ENCODE measurements at regions of chr6 and their contacts with region 1.

Region 1: DNA sequence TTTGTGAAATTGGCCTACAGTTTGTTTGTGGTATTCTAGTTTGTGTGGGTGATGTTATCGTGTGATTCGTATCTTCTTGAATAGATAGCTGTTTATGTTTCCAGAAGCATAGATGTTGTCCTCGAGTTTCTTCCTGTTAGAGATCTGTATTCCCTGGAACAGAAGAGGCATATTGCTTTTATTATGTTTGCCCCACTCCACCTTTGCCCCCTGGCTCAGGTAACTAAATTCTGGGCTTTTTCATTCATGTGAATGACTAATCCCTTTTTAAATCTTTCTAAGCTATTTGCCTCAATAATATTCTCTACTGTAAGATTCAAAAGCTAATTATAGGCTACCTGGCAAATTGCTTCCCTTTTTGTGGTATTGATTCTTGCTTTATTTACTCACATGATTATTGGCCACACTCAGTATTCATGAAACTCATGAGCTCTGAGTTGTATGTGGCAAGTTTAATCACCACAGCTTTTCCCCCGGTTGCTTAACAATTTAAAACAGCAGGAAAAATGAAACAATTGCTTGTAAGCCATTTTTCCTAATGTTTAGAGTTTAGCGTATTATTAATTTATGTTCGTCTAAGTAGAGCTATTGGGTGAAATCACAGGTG is 12.6 kb downstream of the RNF217 start:
- DNase-seq: no peak
- H3K4me3 ChIP-seq: no peak overlapping the region
- H3K27ac ChIP-seq: no peak overlapping the region
- H3K4me1 ChIP-seq: no peaks in the 10 kb centered on the region
- H3K27me3 ChIP-seq: no peaks in the 10 kb centered on the region

Region 2: GRCh38 chr6:124819346-124819745 is 155.5 kb before region 1 on chr6:
- CTCF ChIA-PET with region 1: no interaction called
- POLR2A ChIA-PET with region 1: no interaction called
- DNase-seq: peak in 2 of 3 donors; percentile 17 to 26
- H3K4me3 ChIP-seq: no peak overlapping the region
- H3K27ac ChIP-seq: no peak overlapping the region
- H3K4me1 ChIP-seq: no peaks in the 10 kb centered on the region
- H3K27me3 ChIP-seq: no peaks in the 10 kb centered on the region

Region 3: DNA sequence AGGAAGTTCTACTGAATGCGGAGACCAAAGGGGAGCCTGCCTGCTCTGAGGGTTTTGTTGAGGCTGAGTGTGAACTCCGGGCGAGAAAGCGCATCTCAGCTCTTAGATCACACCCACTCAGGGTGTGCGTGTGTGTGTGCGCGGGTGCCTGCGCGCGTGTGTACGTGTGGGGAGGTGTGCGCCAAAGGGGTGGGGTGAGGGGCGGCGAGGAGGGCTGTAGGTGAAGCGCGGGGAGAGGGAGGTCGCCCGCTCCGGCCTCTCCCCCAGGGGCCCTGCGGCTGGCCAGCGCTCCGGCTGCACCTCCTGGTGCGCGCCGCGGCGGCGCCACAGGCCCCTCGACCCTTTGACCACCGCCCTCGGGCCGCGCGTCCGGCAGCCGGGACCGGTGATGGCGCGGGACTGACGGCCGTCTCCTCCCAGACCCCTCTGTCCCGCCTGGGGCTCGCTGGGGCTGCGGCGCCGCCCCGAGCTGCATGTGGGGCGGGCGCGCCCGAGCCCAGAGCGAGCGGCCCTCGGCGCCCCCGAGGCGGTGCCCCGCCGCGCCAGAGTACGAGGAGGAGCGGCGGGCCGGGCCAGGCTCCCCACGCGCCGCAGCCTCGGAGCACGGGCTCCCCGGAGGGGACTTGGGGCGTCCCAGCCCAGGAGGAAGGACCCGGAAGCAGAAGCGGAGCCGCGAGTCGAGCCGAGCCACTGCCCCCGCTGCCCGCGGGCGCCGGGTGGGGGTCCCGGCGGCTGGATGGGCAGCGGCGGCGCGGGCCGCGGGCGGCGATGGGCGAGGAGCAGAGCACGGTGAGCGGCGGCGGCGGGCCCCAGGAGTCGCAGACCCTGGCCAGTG is 12.9 kb before region 1 on chr6 and contains the start of gene RNF217:
- CTCF ChIA-PET with region 1: interaction called, 16 read pairs
- POLR2A ChIA-PET with region 1: no interaction called
- DNase-seq: peak; percentile 68 to 84 (median 76)
- H3K4me3 ChIP-seq: peak within 1 kb of the TSS; percentile 67 to 94 (median 84)
- H3K27ac ChIP-seq: peak within 1 kb of the TSS; percentile 51 to 89
- H3K4me1 ChIP-seq: peaks cover 15 to 44% (median 30%) of the 10 kb centered on the region in 4 experiments
- H3K27me3 ChIP-seq: no peaks in the 10 kb centered on the region

Region 4: GRCh38 chr6:125273965-125274364 is 299.1 kb after region 1 on chr6:
- CTCF ChIA-PET with region 1: no interaction called
- POLR2A ChIA-PET with region 1: no interaction called
- DNase-seq: no peak
- H3K4me3 ChIP-seq: no peak overlapping the region
- H3K27ac ChIP-seq: no peak overlapping the region
- H3K4me1 ChIP-seq: peaks cover 0 to 6% (median 0%) of the 10 kb centered on the region in 4 experiments
- H3K27me3 ChIP-seq: no peaks in the 10 kb centered on the region

Measured in common myeloid progenitor, CD34-positive (primary cell).